ENCODE measurements at regions of chr15 and their contacts with region 1.

Region 1: DNA sequence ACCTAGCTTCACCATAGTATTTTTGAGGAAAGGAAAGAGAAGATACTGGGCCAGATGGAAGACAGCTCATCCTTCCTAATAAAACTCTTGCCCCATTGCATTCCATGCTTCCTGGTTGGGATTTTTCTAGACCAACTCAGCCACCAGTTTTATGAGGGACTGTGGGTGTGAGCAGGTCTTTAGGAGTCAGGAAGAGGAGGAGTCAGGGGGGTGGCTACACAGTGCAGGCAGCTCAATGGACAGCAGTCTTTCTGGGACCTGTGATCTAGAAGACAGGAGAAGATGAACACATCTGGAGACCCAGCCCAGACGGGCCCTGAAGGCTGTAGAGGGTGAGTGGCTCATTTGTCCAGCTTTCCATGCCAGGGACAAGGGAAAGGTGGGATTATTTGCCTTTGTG is at the start of gene NOX5:
- DNase-seq: no peak
- CTCF ChIP-seq: no peak

Region 2: DNA sequence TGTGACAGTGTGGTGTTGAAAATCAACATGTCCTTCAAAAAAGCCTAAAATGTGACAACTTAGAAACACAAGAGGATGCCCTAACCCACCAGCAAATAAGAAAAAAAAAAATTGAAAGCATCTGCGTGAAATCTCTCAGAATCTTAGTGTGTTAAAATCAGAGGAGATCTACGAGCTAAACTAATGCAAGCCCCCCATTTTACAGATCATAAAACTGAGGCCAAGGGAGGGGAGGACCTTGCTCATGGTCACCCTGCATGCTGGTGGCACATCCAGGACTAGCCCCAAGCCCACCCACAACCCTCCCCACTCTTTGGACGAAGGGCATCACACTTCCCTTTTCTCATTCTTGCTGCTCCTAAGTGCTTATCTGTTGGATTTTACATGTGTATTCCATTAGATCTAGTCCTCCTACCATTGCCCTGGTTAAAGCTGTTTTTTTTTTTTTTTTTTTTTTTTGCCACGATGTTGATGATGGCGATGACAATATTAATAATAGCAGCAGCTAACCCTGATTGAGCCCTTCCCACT is 29.0 kb before region 1 on chr15:
- CTCF ChIA-PET with region 1: no interaction called
- POLR2A ChIA-PET with region 1: interaction called, 12 read pairs
- DNase-seq: no peak
- CTCF ChIP-seq: no peak

Region 3: DNA sequence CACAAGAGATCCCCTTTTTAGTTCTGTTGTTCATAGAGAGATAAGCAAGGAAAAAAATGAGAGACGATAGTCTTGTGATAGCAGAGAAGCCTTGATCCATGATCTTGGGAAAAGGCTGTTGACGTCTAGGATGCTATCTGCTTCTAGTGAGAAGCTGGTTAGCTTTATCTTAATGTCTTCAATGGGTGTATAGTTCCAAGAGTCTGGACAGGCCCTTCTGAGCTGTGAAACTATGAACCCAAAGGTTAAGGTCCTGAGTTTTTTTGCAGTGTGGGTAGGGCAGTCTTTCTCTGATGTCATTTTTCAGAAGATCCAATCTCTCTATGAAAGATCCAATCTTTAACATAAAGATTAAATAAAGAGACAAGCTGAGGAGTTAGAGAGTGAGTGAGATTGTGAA is 10.4 kb before region 1 on chr15:
- CTCF ChIA-PET with region 1: no interaction called
- POLR2A ChIA-PET with region 1: no interaction called
- DNase-seq: no peak
- CTCF ChIP-seq: no peak

Region 4: DNA sequence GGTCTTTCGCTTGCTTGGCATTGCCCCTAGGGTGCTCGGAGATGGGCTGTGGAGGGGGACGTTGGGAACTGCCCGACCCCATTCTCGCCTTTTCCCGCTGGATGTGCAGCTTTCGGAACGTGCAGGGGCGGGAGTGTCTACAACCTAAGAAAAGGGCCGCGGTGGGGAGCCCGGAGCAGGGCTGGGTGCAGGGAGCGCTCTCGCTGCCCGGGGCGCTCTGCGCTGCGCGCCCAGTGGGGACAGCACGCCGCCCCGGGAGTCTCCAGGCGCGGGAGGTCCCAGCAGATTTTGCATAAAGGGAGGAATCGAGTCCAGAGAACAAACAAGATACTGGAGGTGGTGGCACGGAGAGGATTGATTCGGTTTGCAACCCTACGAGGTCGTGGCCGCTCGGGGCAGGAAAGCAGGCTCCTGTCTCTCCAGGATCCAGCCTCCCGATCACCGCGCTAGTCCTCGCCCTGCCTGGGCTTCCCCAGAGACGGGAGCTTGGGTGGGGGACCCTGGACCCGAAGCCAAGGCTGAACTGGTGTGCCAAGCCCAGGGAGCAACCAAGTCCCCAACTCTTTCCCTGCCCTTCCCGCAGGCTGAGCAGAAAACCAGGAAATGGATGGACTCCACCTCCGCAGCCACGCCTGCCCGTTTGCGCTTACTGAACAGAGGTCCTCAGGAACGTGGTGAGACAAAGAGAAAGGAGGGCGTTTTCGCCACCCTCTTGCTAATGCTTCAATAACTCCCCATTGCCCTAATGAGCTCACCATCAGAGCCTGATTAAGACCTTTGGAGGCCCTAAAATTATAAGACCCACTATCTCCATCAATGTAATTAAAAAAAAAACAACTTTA is 59.8 kb after region 1 on chr15:
- CTCF ChIA-PET with region 1: no interaction called
- POLR2A ChIA-PET with region 1: no interaction called
- DNase-seq: no peak
- CTCF ChIP-seq: no peak

Measured in GM10248 (cell line).